ENCODE measurements at regions of chr22 and their contacts with region 1.

Region 1: GRCh38 chr22:50620593-50621355 is 7.2 kb downstream of the ARSA start:
- DNase-seq: peak; percentile 88
- H3K4me3 Mint-ChIP-seq: peak overlapping the region; percentile 82
- H3K27ac Mint-ChIP-seq: peak overlapping the region; percentile 100
- H3K4me1 Mint-ChIP-seq: peaks cover 48% of the 10 kb centered on the region
- H3K27me3 Mint-ChIP-seq: peaks cover 1% of the 10 kb centered on the region

Region 2: DNA sequence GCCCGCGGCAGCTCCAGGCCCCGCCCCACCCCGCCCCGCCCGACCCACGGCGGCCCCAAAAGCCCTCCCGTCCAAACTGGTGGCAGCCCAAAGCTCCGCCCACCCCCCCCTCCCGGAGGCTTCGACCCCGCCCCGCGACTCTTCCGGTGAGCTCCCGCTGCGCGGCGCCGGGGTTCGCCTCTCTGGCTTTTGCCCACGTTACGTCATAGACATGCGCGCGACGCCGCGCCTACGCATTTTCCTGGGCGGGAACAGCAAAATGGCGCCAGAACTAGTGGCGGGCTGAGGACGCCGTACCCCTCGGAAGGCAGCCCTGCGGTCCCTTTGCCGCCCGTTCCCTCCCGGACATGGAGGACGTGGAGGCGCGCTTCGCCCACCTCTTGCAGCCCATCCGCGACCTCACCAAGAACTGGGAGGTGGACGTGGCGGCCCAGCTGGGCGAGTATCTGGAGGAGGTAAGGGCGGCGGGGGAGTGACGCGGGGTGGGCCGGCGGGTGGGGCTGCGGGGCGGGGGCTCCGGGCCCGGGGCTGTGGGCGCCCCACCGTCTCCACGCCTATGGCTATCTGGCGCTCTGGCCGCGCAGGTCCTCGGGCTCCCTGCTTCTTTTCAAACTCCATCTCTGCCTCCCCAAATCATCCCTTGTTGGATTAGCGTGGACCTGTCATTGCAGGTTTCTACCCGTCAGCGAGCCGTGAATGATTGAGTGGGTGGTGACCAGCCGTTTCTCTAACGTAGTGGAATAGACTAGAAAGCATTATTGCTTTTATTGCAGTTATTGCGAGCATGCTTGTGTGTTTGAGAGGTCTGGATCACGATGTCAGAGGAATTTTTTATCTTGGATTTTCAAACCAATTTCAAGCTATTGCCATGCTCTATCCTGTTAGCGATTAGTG is 112.5 kb before region 1 on chr22 and contains the start of gene NCAPH2:
- CTCF ChIA-PET with region 1: interaction called, 10 read pairs
- POLR2A ChIA-PET with region 1: interaction called, 4 read pairs
- DNase-seq: peak; percentile 97
- H3K4me3 Mint-ChIP-seq: peak within 1 kb of the TSS; percentile 96
- H3K27ac Mint-ChIP-seq: peak within 1 kb of the TSS; percentile 96
- H3K4me1 Mint-ChIP-seq: peaks cover 26% of the 10 kb centered on the region
- H3K27me3 Mint-ChIP-seq: no peaks in the 10 kb centered on the region
- total RNA-seq, gene NCAPH2: 110 to 133 TPM

Region 3: GRCh38 chr22:50544078-50544745 is 76.6 kb before region 1 on chr22:
- CTCF ChIA-PET with region 1: interaction called, 10 read pairs
- POLR2A ChIA-PET with region 1: interaction called, 5 read pairs
- DNase-seq: peak; percentile 86
- H3K4me3 Mint-ChIP-seq: peak overlapping the region; percentile 62
- H3K27ac Mint-ChIP-seq: peak overlapping the region; percentile 92
- H3K4me1 Mint-ChIP-seq: peaks cover 58% of the 10 kb centered on the region
- H3K27me3 Mint-ChIP-seq: no peaks in the 10 kb centered on the region

Region 4: DNA sequence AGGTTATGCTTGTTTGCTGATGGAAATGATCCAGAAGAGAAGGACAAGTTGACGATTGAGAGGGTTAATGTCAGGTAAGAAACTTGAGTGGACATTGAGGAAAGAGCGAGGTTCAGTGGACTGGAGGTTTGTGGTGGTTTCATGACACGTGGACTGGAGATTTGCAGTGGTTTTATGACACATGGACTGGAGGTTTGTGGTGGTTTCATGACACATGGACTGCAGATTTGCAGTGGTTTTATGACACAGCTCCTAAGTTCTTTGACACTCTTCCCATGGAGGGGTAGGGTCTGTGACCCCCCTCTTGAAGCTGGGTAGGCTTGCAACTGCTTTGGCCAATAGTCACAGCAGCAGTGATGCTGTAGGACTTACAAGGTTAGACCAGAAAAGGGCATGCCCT is 25.6 kb before region 1 on chr22:
- CTCF ChIA-PET with region 1: no interaction called
- POLR2A ChIA-PET with region 1: no interaction called
- DNase-seq: no peak
- H3K4me3 Mint-ChIP-seq: no peak overlapping the region
- H3K27ac Mint-ChIP-seq: no peak overlapping the region
- H3K4me1 Mint-ChIP-seq: peaks cover 5% of the 10 kb centered on the region
- H3K27me3 Mint-ChIP-seq: peaks cover 12% of the 10 kb centered on the region

Region 5: DNA sequence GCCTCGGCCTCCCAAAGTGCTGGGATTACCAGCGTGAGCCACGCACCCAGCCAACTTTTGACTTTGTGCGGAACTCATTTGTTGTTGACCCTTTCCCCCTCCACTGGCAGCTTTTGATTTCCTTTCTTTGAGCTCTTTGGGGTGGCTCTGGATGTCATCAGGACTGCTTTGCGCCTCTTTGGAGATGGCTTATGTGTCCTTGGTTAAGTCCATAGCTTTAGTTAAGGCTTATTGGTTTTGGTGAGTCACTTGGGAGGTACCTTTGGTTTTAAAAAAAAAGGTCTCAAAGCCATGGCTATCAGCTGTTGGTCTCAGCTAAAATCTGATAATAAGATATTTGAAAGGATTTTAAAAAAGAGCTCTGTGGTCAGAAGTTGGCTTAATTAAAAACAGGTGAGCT is 12.3 kb after region 1 on chr22:
- CTCF ChIA-PET with region 1: interaction called, 11 read pairs
- POLR2A ChIA-PET with region 1: no interaction called
- DNase-seq: no peak
- H3K4me3 Mint-ChIP-seq: no peak overlapping the region
- H3K27ac Mint-ChIP-seq: no peak overlapping the region
- H3K4me1 Mint-ChIP-seq: peaks cover 13% of the 10 kb centered on the region
- H3K27me3 Mint-ChIP-seq: peaks cover 2% of the 10 kb centered on the region

Measured in activated CD4-positive, alpha-beta T cell treated with anti-CD3 and anti-CD28 coated beads, Interleukin-2, amount 10 ng/mL, durations not matched to agents 7 days and 5 days (primary cell).